Naive thymus-derived CD4-positive, alpha-beta T cell (primary cell): ENCODE measurements at regions of chr13 and their contacts with region 1.

Region 1: DNA sequence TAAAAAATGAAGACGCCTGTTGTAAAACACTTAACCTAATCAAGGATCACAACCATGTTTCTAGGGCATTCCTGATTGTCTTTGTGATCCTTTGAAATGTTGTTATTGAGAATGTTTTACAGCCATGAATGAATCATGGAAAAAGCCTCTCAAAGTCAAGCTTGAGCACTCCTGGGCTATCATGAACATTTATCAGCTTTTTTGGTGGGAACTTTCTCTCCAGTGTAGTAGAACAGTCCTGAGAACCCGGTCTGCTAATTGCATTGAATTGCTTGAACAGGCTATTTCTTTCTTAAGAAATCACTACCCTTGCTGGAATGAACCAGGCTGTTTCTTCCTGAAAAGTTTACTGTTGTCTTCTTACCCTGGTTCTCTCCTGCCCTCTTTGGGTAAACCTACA is 516.5 kb downstream of the FGF9 start:
- DNase-seq: peak in 2 of 9 donors; percentile 7 to 10
- ATAC-seq: no peak
- H3K4me3 ChIP-seq: no peak overlapping the region
- H3K4me3 Mint-ChIP-seq: no peak overlapping the region
- H3K27ac ChIP-seq: no peak overlapping the region
- H3K27ac Mint-ChIP-seq: no peak overlapping the region
- H3K4me1 ChIP-seq: no peaks in the 10 kb centered on the region
- H3K4me1 Mint-ChIP-seq: peaks cover 0 to 17% (median 0%) of the 10 kb centered on the region in 7 donors
- H3K27me3 ChIP-seq: no peaks in the 10 kb centered on the region
- H3K27me3 Mint-ChIP-seq: peaks cover 0 to 2% (median 0%) of the 10 kb centered on the region in 5 donors

Region 2: DNA sequence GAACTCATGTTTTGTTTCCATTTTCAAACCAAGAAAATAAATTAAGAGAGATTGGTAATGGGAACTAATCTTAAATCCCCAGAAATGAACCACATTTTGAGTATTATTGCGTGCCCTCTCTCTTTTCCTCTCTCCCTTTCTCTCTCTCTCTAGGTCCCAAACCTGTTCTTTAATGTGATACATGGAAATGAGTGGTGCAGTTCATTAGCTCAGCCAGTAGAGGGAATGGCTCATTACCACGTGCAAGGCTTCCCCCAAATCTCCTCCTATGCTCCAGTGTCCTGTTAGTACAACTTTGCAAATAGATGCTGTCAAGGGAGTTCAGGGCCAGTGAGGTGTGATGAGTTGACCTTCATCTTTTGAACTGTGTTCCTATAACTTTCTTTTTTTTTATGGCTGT is 338.0 kb before region 1 on chr13:
- CTCF ChIA-PET with region 1: no interaction called
- POLR2A ChIA-PET with region 1: no interaction called
- intact Hi-C with region 1: loop called in 1 of 2 experiments (anchors 5 kb)
- DNase-seq: peak in 6 of 9 donors; percentile 2 to 37 (median 21)
- ATAC-seq: peak; percentile 70
- H3K4me3 ChIP-seq: no peak overlapping the region
- H3K4me3 Mint-ChIP-seq: no peak overlapping the region
- H3K27ac ChIP-seq: no peak overlapping the region
- H3K27ac Mint-ChIP-seq: no peak overlapping the region
- H3K4me1 ChIP-seq: no peaks in the 10 kb centered on the region
- H3K4me1 Mint-ChIP-seq: peaks cover 0 to 6% (median 2%) of the 10 kb centered on the region in 7 donors
- H3K27me3 ChIP-seq: no peaks in the 10 kb centered on the region
- H3K27me3 Mint-ChIP-seq: no peaks in the 10 kb centered on the region

Region 3: DNA sequence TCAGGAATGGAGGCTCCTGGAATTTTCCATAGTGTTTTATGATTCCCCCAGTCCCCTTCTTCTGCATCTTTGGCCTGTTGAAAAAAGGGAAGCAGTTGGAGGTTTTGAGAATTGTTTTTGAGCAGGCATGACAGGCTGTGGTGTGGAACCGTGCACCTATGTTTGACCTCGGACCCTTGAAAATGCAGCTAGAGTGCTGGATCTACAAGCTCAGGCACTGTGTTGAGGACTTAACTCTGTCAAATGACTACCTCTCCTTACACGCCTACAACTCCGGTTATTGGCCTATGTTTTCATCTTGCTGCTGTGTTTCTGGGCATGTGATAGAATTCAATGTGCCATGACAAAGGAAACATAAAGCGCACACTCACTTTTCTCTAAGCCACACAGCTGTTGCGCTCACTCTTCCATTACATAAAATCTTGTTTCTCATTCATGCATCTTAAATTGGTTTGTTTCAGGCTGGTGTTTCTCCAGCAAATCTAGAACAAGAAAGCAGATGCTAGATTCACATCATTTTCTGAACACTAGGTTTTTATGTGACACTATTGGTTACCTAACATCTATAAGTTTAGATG is 100.1 kb after region 1 on chr13:
- CTCF ChIA-PET with region 1: no interaction called
- POLR2A ChIA-PET with region 1: no interaction called
- intact Hi-C with region 1: no loop called
- DNase-seq: no peak
- ATAC-seq: no peak
- H3K4me3 ChIP-seq: no peak overlapping the region
- H3K4me3 Mint-ChIP-seq: no peak overlapping the region
- H3K27ac ChIP-seq: no peak overlapping the region
- H3K27ac Mint-ChIP-seq: no peak overlapping the region
- H3K4me1 ChIP-seq: no peaks in the 10 kb centered on the region
- H3K4me1 Mint-ChIP-seq: no peaks in the 10 kb centered on the region
- H3K27me3 ChIP-seq: no peaks in the 10 kb centered on the region
- H3K27me3 Mint-ChIP-seq: peaks cover 0 to 17% (median 11%) of the 10 kb centered on the region in 5 donors